ENCODE measurements at regions of chr20 and their contacts with region 1.

Region 1: GRCh38 chr20:49846206-49846807 is 33.7 kb downstream of the SLC9A8 start:
- DNase-seq: peak; percentile 47 to 72
- ATAC-seq: peak; percentile 92 to 96
- H3K4me3 ChIP-seq: no peak overlapping the region
- H3K27ac ChIP-seq: peak overlapping the region; percentile 59 to 74; a peak in 5 of 6 replicates
- H3K4me1 ChIP-seq: peaks cover 20% of the 10 kb centered on the region; the same call in 1 of the 3 replicates
- CTCF ChIP-seq: peak; percentile 86
- EP300 ChIP-seq: no peak
- POLR2A ChIP-seq: no peak
- RAD21 ChIP-seq: peak; percentile 89 to 91

Region 2: GRCh38 chr20:49603209-49603627 is 243.1 kb before region 1 on chr20:
- CTCF ChIA-PET with region 1: interaction called, 319 read pairs
- POLR2A ChIA-PET with region 1: no interaction called
- DNase-seq: peak in 1 of 2 experiments; percentile 69
- ATAC-seq: peak; percentile 67 to 79
- H3K4me3 ChIP-seq: no peak overlapping the region
- H3K27ac ChIP-seq: peak overlapping the region; percentile 69 to 75; a peak in 4 of 6 replicates
- H3K4me1 ChIP-seq: peaks cover 21% of the 10 kb centered on the region
- CTCF ChIP-seq: peak; percentile 39
- EP300 ChIP-seq: no peak
- POLR2A ChIP-seq: no peak
- RAD21 ChIP-seq: peak; percentile 35 to 55; a peak in 4 of 5 replicates

Region 3: GRCh38 chr20:49668181-49668877 is 178.0 kb before region 1 on chr20:
- CTCF ChIA-PET with region 1: interaction called, 10 read pairs
- POLR2A ChIA-PET with region 1: no interaction called
- DNase-seq: no peak
- ATAC-seq: no peak; a peak in 1 of 6 replicates
- H3K4me3 ChIP-seq: no peak overlapping the region
- H3K27ac ChIP-seq: peak overlapping the region in 1 of 2 experiments; percentile 56; a peak in 3 of 6 replicates
- H3K4me1 ChIP-seq: peaks cover 94% of the 10 kb centered on the region
- CTCF ChIP-seq: no peak
- EP300 ChIP-seq: no peak
- POLR2A ChIP-seq: no peak
- RAD21 ChIP-seq: no peak

Region 4: GRCh38 chr20:49712996-49713752 is 133.1 kb before region 1 on chr20:
- CTCF ChIA-PET with region 1: interaction called, 26 read pairs
- POLR2A ChIA-PET with region 1: no interaction called
- DNase-seq: peak in 1 of 2 experiments; percentile 27
- ATAC-seq: peak; percentile 68 to 81
- H3K4me3 ChIP-seq: peak overlapping the region; percentile 84
- H3K27ac ChIP-seq: peak overlapping the region; percentile 97 to 98
- H3K4me1 ChIP-seq: peaks cover 56% of the 10 kb centered on the region
- CTCF ChIP-seq: no peak
- EP300 ChIP-seq: peak in 1 of 2 experiments; percentile 12; a peak in 1 of 5 replicates
- POLR2A ChIP-seq: no peak
- RAD21 ChIP-seq: no peak

Region 5: DNA sequence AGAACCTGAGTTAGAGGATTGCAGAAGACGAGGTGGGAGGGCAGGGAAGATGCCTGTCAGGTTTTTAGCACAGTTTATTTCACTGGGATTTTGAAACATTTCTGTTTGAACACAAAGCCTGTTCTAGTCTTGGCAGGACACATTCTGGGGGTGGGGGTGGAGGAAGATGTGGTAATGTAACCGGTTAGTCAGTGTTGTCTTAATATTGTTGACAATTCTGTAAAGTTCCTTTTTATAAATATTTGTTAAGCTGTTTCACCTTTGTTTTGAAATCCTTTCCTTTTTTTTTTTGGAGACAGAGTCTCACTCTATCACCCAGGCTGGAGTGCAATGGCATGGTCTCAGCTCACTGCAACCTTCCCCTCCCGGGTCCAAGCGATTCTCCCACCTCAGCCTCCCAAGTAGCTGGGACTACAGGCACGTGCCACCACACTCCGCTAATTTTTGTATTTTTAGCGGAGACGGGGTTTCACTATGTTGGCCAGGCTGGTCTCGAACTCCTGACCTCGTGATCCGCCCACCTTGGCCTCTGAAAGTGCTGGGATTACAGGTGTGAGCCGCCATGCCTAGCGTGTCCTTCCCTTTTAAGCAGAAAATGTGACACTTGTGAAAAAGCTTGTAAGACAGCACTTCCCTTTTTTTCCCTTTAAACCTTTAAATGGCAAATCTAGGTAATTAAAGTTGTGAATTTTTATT is 13.5 kb before region 1 on chr20:
- CTCF ChIA-PET with region 1: interaction called, 18 read pairs
- POLR2A ChIA-PET with region 1: no interaction called
- DNase-seq: peak in 1 of 2 experiments; percentile 52
- ATAC-seq: peak; percentile 61 to 67; a peak in 4 of 6 replicates
- H3K4me3 ChIP-seq: no peak overlapping the region
- H3K27ac ChIP-seq: peak overlapping the region; percentile 64 to 72; a peak in 4 of 6 replicates
- H3K4me1 ChIP-seq: peaks cover 23% of the 10 kb centered on the region
- CTCF ChIP-seq: no peak
- EP300 ChIP-seq: peak; percentile 61 to 64; a peak in 2 of 5 replicates
- POLR2A ChIP-seq: no peak
- RAD21 ChIP-seq: no peak

Region 6: GRCh38 chr20:49888345-49888966 is 42.1 kb after region 1 on chr20:
- CTCF ChIA-PET with region 1: interaction called, 26 read pairs
- POLR2A ChIA-PET with region 1: no interaction called
- DNase-seq: peak; percentile 66 to 77
- ATAC-seq: peak; percentile 56 to 81; a peak in 5 of 6 replicates
- H3K4me3 ChIP-seq: no peak overlapping the region
- H3K27ac ChIP-seq: peak overlapping the region in 1 of 2 experiments; percentile 71; a peak in 3 of 6 replicates
- H3K4me1 ChIP-seq: peaks cover 18% of the 10 kb centered on the region
- CTCF ChIP-seq: peak; percentile 93
- EP300 ChIP-seq: no peak
- POLR2A ChIP-seq: no peak
- RAD21 ChIP-seq: peak; percentile 87 to 89

Measured in A549 (cell line).